Calu3 (cell line): ENCODE measurements at regions of chr2 and their contacts with region 1.

Region 1: GRCh38 chr2:170723446-170723958 is 8.4 kb downstream of the SP5 start:
- DNase-seq: no peak
- H3K4me3 Mint-ChIP-seq: no peak overlapping the region
- H3K27ac Mint-ChIP-seq: no peak overlapping the region
- H3K4me1 Mint-ChIP-seq: no peaks in the 10 kb centered on the region
- H3K27me3 Mint-ChIP-seq: no peaks in the 10 kb centered on the region
- CTCF ChIP-seq: no peak

Region 2: DNA sequence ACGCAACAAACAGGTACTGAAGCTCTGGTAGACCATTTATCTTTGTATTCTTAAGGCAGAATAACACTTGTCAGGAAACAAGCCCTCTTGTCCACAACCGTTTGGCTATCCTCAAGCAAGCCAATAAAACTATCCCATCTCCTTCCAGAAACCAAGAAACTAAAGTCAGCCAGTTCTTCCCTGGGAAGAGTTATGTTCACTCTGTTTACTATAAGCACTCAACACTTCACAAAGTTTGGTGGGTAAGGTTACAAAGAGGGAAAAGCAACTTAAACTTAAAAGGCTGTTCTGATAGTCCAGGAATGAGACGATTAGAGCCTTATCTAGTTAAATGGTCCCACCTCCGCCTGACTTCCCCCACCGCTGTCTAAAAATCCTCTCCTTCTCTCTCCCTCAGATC is 1386.8 kb before region 1 on chr2:
- CTCF ChIA-PET with region 1: interaction called, 13 read pairs
- intact Hi-C with region 1: no loop called
- DNase-seq: no peak
- H3K4me3 Mint-ChIP-seq: no peak overlapping the region
- H3K27ac Mint-ChIP-seq: no peak overlapping the region
- H3K4me1 Mint-ChIP-seq: no peaks in the 10 kb centered on the region
- H3K27me3 Mint-ChIP-seq: peaks cover 64% of the 10 kb centered on the region
- CTCF ChIP-seq: no peak